Adrenal gland (tissue), 19 donors: ENCODE measurements at regions of chr18 and their contacts with region 1.

Region 1: GRCh38 chr18:741931-742512 is 29.6 kb upstream of the ENOSF1 start:
- DNase-seq: no peak
- H3K4me3 ChIP-seq: no peak overlapping the region
- H3K27ac ChIP-seq: no peak overlapping the region
- H3K4me1 ChIP-seq: no peaks in the 10 kb centered on the region
- H3K27me3 ChIP-seq: no peaks in the 10 kb centered on the region
- CTCF ChIP-seq: peak; percentile 71 to 89 (median 80)
- POLR2A ChIP-seq: no peak

Region 2: GRCh38 chr18:801137-801536 is 59.1 kb after region 1 on chr18:
- intact Hi-C with region 1: no loop called
- DNase-seq: no peak
- H3K4me3 ChIP-seq: no peak overlapping the region
- H3K27ac ChIP-seq: no peak overlapping the region
- H3K4me1 ChIP-seq: peaks cover 6 to 14% of the 10 kb centered on the region in 2 donors
- H3K27me3 ChIP-seq: no peaks in the 10 kb centered on the region
- CTCF ChIP-seq: no peak
- POLR2A ChIP-seq: no peak

Region 3: GRCh38 chr18:812376-813171 is 70.6 kb after region 1 on chr18:
- intact Hi-C with region 1: loop called in 1 of 2 experiments (anchors 5 kb)
- DNase-seq: peak; percentile 82 to 90 (median 86)
- H3K4me3 ChIP-seq: peak overlapping the region in 3 of 4 donors; percentile 52 to 88 (median 54)
- H3K27ac ChIP-seq: peak overlapping the region; percentile 78 to 98 (median 90)
- H3K4me1 ChIP-seq: peaks cover 0 to 27% of the 10 kb centered on the region in 2 donors
- H3K27me3 ChIP-seq: no peaks in the 10 kb centered on the region
- CTCF ChIP-seq: no peak
- POLR2A ChIP-seq: peak; percentile 50 to 57

Region 4: GRCh38 chr18:830315-830901 is 88.4 kb after region 1 on chr18:
- intact Hi-C with region 1: loop called (anchors 5 kb)
- DNase-seq: peak in 5 of 7 donors; percentile 25 to 31 (median 29)
- H3K4me3 ChIP-seq: no peak overlapping the region
- H3K27ac ChIP-seq: peak overlapping the region in 2 of 5 donors; percentile 26 to 38
- H3K4me1 ChIP-seq: peaks cover 5 to 23% of the 10 kb centered on the region in 2 donors
- H3K27me3 ChIP-seq: no peaks in the 10 kb centered on the region
- CTCF ChIP-seq: no peak
- POLR2A ChIP-seq: no peak

Region 5: GRCh38 chr18:839224-840022 is 97.4 kb after region 1 on chr18:
- intact Hi-C with region 1: loop called (anchors 5 kb)
- DNase-seq: peak; percentile 83 to 96 (median 91)
- H3K4me3 ChIP-seq: no peak overlapping the region
- H3K27ac ChIP-seq: peak overlapping the region; percentile 22 to 77 (median 63)
- H3K4me1 ChIP-seq: peaks cover 7 to 24% of the 10 kb centered on the region in 2 donors
- H3K27me3 ChIP-seq: no peaks in the 10 kb centered on the region
- CTCF ChIP-seq: peak; percentile 90 to 99 (median 96)
- POLR2A ChIP-seq: no peak